ENCODE measurements at regions of chr17 and their contacts with region 1.

Region 1: GRCh38 chr17:2070241-2071023 is 15.5 kb downstream of the HIC1 start:
- DNase-seq: no peak
- H3K4me3 ChIP-seq: no peak overlapping the region
- H3K27ac ChIP-seq: peak overlapping the region; percentile 87
- H3K27me3 ChIP-seq: no peaks in the 10 kb centered on the region
- CTCF ChIP-seq: no peak

Region 2: DNA sequence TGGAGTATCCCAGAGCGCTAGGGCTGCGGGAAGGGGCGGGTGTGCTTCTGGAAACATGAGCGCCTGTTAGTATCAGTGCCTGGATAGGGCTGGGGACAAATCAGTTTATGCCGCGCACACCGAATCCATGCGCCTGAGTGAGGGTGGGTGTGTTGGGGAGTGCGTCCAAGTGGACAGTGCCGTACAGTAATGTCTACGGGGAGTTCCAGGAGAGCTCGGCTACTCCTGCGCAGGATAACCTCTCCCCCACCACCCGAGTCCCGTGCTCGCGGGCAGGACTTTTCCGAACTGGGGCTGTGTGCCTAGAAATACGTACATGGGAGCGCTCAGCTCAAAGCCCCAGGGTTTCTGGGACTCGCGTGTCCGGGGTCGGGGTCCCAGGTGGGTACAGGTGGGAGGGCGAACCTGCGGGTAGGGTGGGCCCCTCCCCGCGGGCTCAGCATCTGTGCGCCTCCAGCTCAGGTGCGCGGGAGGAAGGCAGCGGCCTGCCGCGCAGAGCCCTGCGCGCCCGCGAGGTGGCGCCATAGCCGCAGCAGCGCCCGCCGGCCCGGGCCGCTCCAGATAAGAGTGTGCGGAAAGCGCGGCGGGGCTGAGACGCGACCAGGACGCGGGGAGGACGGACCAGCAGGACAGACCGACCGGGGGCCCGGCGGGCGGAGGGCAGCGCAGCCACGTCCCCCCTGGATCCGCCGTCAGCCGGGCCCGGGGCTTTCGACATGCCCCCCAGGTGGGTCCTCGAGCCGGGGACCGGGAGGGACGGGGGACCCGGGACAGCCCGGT is 15.7 kb before region 1 on chr17 and contains the start of gene HIC1:
- CTCF ChIA-PET with region 1: interaction called, 10 read pairs
- POLR2A ChIA-PET with region 1: interaction called, 11 read pairs
- DNase-seq: no peak
- H3K4me3 ChIP-seq: peak within 1 kb of the TSS; percentile 72
- H3K27ac ChIP-seq: peak within 1 kb of the TSS; percentile 47
- H3K27me3 ChIP-seq: peaks cover 4% of the 10 kb centered on the region
- CTCF ChIP-seq: peak; percentile 72
- polyA plus RNA-seq, gene HIC1: 12.7 and 14.4 TPM in 2 replicates

Region 3: GRCh38 chr17:2094891-2095535 is 24.6 kb after region 1 on chr17:
- CTCF ChIA-PET with region 1: interaction called, 3 read pairs
- POLR2A ChIA-PET with region 1: interaction called, 10 read pairs
- DNase-seq: no peak
- H3K4me3 ChIP-seq: no peak overlapping the region
- H3K27ac ChIP-seq: peak overlapping the region; percentile 21
- H3K27me3 ChIP-seq: no peaks in the 10 kb centered on the region
- CTCF ChIP-seq: peak; percentile 92

Region 4: DNA sequence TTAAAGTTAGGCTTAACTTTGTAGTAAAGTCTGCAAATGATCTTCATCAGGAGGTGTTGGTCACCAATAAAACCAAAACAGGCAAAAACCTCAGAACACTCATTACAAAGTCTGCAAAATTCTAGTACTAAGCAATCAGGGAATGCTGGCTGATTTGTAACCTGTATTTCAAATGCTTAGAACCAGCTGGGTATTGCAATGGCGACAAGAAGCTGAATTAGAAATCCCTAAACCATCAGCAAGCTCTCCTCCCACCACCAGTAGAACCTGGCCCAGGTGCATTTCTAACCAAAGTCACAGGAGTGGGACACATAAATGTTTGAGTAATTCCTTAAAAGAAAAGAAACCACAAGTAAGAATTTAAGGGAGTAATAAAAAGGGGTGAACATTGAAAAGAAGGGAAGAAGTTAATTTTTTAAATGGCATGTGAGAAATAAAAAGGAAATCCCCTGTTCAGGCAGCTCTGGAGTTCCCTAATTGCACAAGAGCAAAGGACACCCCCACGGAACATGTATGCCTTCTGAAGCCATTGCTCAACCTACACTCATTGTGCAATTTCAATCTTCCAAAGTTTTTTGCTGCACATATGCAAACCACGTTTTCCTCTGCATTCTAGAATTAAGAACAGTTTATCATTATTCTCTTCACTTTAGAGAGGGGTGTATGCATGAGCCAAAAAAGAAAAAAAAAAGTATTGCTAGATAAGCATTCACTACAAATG is 87.4 kb after region 1 on chr17:
- CTCF ChIA-PET with region 1: no interaction called
- POLR2A ChIA-PET with region 1: no interaction called
- DNase-seq: peak; percentile 84
- H3K4me3 ChIP-seq: no peak overlapping the region
- H3K27ac ChIP-seq: peak overlapping the region; percentile 72
- H3K27me3 ChIP-seq: no peaks in the 10 kb centered on the region
- CTCF ChIP-seq: no peak